ENCODE measurements at regions of chr17 and their contacts with region 1.

Region 1: DNA sequence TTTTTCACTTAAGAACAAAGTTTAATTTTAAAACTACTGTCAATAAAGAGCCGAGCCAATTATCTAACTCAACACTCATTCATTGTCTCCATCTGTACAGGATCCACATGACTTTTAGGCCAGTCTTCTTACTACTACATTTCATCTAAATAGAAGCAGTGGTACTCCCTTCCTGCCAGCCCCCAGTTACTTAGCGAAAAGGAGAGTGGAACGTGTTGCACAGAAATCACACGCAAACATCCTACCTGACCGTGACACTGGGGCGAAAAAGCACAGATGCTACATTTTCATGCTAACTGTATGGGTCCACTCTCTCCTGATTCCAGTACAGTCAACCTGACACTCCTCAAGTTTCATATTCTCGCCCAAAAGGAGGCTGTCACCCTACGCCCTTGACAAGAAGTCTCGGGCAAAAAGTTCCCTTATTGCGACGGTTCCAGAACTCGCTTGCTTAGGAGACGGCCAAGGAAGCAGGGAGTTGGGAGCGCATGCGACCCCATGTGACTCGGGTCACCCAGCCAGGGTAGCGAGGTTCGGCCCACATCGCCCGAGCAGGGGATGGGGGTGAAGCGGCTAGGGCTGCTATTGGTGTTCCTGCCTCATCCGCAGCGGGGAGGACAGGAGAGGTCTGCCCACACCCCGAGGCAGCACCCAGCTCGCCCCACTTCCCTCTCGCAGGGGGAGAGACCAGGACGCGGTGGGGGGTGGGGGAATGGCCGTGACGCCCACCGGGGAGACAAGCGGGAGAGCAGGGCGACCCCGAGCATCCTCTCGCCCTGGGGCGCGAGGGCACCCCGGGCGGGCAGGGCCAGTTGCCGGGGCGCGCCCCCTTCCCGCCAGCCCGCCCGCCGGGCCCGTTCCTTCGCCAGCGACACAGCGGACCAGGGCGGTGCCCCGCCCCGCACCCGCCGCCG is 935 bp downstream of the GNA13 start:
- DNase-seq: peak; percentile 41 to 43
- H3K4me3 ChIP-seq: peak overlapping the region; percentile 80
- H3K27ac ChIP-seq: peak overlapping the region; percentile 85
- H3K4me1 ChIP-seq: peaks cover 20% of the 10 kb centered on the region
- H3K27me3 ChIP-seq: no peaks in the 10 kb centered on the region
- CTCF ChIP-seq: no peak

Region 2: DNA sequence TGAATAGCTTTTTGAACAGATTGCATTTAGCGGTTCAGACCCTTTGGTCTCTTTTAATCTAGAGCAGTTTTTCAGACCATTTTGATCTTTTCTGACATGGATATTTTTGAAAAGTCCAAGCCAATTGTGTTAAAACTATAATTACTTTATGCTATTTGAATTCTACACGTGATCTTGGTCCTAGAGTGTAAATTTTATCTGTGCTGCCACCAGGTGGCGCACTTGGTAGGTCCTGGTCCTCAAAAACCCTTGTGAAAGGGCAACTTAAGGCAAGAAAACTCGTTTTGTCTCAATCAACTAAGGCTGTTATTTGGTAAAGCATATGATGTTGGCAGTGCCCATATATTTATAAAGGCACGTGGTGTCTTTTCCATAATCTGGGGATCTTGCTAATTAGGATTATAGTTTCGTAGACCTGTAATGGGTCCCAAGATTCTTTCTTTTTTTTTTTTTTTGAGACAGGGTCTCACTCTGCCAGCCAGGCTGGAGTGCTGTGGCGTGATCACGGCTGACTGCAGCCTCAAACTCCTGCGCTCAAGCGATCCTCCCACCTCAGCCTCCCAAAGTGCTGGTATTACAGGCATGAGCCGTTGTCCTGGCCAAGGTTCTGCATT is 748.6 kb before region 1 on chr17:
- CTCF ChIA-PET with region 1: no interaction called
- POLR2A ChIA-PET with region 1: interaction called, 10 read pairs
- intact Hi-C with region 1: no loop called
- DNase-seq: peak; percentile 62
- H3K4me3 ChIP-seq: no peak overlapping the region
- H3K27ac ChIP-seq: no peak overlapping the region
- H3K4me1 ChIP-seq: peaks cover 12% of the 10 kb centered on the region
- H3K27me3 ChIP-seq: no peaks in the 10 kb centered on the region
- CTCF ChIP-seq: peak; percentile 95

Region 3: DNA sequence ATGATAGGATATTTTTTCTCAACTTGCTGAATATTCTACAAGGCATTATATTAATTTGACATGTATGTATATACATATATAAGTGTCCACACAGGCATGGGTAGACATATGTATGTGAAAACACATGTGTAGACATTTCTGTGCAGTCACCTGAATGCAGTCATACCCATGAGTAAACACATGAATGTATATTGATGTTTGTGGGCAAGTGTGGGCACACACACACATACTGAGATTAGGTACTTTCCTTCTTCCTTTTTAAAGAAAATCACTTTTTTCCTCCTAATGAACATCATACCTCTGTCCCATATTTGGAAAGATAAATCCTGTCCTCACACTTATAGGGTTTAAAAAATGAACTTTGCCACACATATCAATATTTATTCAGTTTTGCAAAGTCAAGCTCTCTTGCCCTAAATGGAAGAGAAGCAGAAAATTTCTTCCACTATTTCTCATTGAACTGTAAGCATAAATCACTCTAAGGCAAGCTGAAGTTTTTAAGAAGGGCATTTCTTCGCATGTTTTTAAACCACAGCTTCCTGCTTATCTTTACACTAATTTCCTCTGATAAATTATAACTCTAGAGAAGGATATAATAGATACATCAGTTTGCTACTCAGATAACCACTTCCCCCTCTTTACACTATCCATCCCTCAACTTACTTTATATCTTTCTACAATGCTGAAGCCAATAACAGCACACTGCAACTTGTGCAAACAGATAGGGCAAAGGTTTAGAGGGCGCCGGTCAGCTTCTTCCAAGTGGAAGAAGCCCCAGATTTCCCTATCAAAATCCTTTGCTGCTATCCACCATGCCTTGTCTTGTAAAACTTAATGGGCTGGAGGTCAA is 86.7 kb before region 1 on chr17:
- CTCF ChIA-PET with region 1: interaction called, 12 read pairs
- POLR2A ChIA-PET with region 1: no interaction called
- intact Hi-C with region 1: loop called (anchors 2 kb)
- DNase-seq: no peak
- H3K4me3 ChIP-seq: no peak overlapping the region
- H3K27ac ChIP-seq: no peak overlapping the region
- H3K4me1 ChIP-seq: peaks cover 31% of the 10 kb centered on the region
- H3K27me3 ChIP-seq: no peaks in the 10 kb centered on the region
- CTCF ChIP-seq: no peak

Region 4: GRCh38 chr17:64992325-64992811 is 63.2 kb before region 1 on chr17:
- CTCF ChIA-PET with region 1: no interaction called
- POLR2A ChIA-PET with region 1: no interaction called
- intact Hi-C with region 1: loop called (anchors 2 kb)
- DNase-seq: peak; percentile 95 to 99
- H3K4me3 ChIP-seq: no peak overlapping the region
- H3K27ac ChIP-seq: peak overlapping the region; percentile 86
- H3K4me1 ChIP-seq: peaks cover 60% of the 10 kb centered on the region
- H3K27me3 ChIP-seq: no peaks in the 10 kb centered on the region
- CTCF ChIP-seq: no peak

Region 5: DNA sequence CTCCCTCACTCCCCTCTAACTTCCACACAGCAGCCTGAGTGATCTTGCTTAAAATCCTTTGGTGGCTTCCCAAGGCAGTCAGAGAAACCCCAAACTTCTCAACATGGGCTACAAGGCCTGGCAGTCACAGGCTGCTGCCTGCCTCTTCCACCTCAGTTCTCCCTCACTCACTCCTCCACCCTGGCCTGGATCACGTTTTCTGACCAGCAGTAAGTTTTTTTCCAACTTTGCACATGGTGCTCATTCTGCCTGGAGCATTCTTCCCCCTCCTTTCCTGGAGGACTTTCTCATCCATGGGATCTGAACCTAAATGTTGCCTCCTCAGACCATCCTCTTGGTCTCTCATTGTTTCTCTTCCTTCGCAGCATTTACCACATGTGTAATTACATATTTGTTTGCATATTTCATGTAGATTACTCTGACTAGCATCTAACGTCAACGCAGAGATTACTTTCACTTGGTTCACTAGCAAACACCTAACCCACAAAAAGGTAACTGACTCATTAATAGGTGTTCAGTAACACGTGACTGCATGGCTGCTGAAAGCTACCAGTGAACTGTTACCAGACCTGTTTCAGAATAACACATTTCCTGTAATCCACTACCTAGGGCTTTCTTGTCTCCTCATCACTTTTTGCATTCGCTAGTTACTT is 16.1 kb before region 1 on chr17:
- CTCF ChIA-PET with region 1: interaction called, 3 read pairs
- POLR2A ChIA-PET with region 1: interaction called, 32 read pairs
- intact Hi-C with region 1: no loop called
- DNase-seq: peak; percentile 35 to 87
- H3K4me3 ChIP-seq: no peak overlapping the region
- H3K27ac ChIP-seq: peak overlapping the region; percentile 45
- H3K4me1 ChIP-seq: peaks cover 17% of the 10 kb centered on the region
- H3K27me3 ChIP-seq: no peaks in the 10 kb centered on the region
- CTCF ChIP-seq: no peak

Region 6: DNA sequence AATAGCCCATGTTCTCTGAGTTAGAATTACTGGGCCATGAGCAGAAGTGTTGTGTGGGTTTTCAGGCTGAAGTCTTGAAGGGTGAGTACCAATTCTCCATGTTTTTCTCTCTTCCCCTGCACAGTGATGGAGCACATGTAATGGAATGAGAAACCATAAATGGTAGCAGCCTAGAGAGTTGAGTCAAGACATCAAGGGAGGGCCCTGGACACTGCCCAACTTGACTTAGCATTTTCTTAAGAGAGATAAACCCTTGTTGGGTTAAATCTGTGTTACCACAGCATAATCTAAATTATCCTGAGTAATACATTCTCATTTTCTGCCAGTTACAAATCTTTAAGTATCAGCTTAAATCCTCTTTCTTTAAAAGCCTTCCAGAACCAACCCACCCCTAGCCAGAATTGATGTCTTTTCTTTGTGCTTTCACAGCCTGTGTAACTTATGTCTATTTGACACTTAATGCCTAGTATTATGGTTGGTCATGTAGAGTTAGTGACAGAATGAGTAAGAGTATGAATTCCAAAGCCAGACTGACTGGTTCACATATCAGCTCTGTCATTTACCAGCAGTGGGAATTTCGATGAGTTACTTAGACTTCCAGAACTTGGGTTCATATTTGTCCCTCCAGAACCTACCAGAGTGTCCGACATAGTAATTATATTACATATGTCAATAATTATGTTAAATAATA is 54.5 kb after region 1 on chr17:
- CTCF ChIA-PET with region 1: no interaction called
- POLR2A ChIA-PET with region 1: no interaction called
- intact Hi-C with region 1: no loop called
- DNase-seq: no peak
- H3K4me3 ChIP-seq: no peak overlapping the region
- H3K27ac ChIP-seq: no peak overlapping the region
- H3K4me1 ChIP-seq: peaks cover 31% of the 10 kb centered on the region
- H3K27me3 ChIP-seq: no peaks in the 10 kb centered on the region
- CTCF ChIP-seq: no peak

Region 7: DNA sequence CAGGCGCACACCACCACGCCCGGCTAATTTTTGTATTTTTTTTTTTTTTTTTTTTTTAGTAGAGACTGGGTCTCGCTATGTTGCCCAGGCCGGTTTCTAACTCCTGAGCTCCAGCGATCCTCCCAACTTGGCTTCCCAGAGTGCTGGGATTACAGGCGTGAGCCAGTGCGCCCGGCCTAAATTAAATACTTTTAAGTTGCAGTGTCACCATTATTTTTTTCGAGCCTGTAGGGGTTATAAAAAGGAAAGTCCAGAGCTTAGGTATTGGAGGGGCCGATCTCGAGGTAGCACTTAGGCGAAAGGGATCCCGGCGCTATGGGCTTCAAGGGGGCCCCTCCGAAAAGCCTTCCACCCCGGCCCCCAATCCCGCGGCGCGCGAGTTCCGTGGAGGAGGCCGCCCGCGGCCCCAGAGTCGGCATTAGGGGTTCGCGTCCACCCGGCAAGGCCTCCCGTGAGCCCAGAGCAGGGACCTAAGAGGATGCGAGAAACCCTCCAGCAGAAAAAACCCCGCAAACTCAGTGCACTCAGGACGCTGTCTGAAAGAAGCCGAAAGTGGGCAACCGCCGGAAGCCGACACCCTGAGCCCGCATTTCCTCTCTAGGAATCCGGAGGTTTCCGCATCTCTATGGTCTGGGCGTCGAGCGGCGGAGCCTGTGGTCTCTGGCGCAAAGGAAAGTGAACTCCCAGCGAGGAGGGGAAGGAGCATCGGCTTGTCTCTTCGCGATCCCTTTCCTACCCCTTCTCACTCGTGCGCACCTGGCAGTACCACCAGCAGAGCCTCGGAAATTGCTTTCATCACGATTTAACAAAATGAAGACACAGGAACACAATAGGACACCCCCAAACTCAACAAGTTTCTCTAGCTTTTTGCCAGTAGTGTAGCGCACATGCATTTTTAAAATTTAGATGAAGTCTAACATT is 67.5 kb after region 1 on chr17:
- CTCF ChIA-PET with region 1: no interaction called
- POLR2A ChIA-PET with region 1: interaction called, 11 read pairs
- intact Hi-C with region 1: no loop called
- DNase-seq: peak; percentile 77 to 80
- H3K4me3 ChIP-seq: peak overlapping the region; percentile 68
- H3K27ac ChIP-seq: peak overlapping the region; percentile 41
- H3K4me1 ChIP-seq: peaks cover 21% of the 10 kb centered on the region
- H3K27me3 ChIP-seq: no peaks in the 10 kb centered on the region
- CTCF ChIP-seq: no peak

Region 8: GRCh38 chr17:65163990-65164495 is 108.4 kb after region 1 on chr17:
- CTCF ChIA-PET with region 1: no interaction called
- POLR2A ChIA-PET with region 1: interaction called, 14 read pairs
- intact Hi-C with region 1: no loop called
- DNase-seq: peak in 1 of 2 experiments; percentile 24
- H3K4me3 ChIP-seq: no peak overlapping the region
- H3K27ac ChIP-seq: no peak overlapping the region
- H3K4me1 ChIP-seq: peaks cover 5% of the 10 kb centered on the region; the same call in 1 of the 2 replicates
- H3K27me3 ChIP-seq: no peaks in the 10 kb centered on the region; the same call in 1 of the 2 replicates
- CTCF ChIP-seq: no peak